A673 (cell line): ENCODE measurements at regions of chr7 and their contacts with region 1.

Region 1: DNA sequence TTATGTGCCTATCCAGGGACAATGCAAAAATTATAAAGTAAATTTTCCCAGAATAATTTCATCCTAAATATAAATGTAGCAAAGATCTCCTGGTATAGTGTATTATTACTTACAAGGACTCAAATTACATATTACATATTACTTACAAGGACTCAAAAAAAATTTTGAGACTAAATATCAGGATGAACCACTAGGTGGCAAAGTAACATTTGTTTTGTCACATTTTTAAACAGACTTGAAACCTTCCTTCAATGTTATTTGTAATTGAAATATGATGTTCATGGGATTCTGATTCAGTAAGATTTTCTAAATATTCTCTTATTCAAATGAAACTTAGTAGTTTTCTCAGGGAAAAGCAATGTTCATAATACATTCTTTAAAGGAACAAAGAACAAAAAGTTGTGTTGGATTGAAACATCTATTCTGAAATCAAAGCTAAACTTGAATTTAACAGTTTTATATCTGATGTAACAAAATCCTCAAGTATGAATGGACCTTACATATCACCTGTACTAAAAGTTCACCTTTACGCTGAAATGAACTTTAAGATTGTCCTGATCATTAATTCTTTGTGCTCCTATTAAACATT is 74.3 kb upstream of the GNAI1 start:
- DNase-seq: peak; percentile 77
- H3K4me3 ChIP-seq: no peak overlapping the region
- H3K27ac ChIP-seq: no peak overlapping the region
- H3K4me1 ChIP-seq: no peaks in the 10 kb centered on the region
- H3K27me3 ChIP-seq: no peaks in the 10 kb centered on the region
- CTCF ChIP-seq: peak; percentile 70

Region 2: DNA sequence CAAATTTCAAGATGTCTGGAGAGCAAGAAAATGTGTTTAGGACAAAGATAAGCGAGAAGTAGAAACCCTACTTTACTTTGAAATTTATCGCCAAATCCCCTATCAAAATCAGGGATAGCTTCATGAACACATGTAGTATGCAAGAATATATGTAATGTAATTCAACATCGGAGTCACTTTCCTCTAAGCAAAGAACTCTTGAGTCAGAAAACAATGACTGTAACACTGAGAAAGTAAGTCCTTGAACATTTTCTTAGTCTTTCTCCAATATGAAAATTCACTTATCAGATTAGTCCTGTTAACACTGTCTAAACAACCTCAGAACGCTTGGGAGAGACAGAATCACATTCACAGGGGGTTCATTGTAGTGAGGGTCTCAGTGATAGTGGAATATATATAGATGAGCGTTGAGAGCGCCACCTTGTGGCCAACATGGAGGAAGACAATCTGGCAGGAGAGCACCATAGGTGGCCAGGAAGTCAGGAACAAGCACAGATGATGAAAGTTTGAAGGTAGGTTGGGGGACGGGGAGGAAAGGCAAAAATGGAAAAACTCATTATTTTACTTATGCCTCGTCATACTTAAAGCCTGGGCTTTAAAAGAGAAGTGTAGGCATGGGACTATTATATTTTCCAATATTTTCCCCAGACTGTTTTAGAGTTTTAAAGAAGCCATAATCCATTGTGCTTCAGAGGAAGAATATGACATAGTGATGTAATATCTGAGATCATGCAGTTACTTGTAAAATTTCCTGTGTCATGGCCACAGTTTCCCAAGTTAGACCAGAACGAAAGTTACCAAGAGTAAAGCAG is 41.2 kb before region 1 on chr7:
- CTCF ChIA-PET with region 1: no interaction called
- POLR2A ChIA-PET with region 1: no interaction called
- intact Hi-C with region 1: no loop called
- DNase-seq: peak; percentile 71
- H3K4me3 ChIP-seq: no peak overlapping the region
- H3K27ac ChIP-seq: no peak overlapping the region
- H3K4me1 ChIP-seq: peaks cover 10% of the 10 kb centered on the region
- H3K27me3 ChIP-seq: no peaks in the 10 kb centered on the region
- CTCF ChIP-seq: peak; percentile 97

Region 3: DNA sequence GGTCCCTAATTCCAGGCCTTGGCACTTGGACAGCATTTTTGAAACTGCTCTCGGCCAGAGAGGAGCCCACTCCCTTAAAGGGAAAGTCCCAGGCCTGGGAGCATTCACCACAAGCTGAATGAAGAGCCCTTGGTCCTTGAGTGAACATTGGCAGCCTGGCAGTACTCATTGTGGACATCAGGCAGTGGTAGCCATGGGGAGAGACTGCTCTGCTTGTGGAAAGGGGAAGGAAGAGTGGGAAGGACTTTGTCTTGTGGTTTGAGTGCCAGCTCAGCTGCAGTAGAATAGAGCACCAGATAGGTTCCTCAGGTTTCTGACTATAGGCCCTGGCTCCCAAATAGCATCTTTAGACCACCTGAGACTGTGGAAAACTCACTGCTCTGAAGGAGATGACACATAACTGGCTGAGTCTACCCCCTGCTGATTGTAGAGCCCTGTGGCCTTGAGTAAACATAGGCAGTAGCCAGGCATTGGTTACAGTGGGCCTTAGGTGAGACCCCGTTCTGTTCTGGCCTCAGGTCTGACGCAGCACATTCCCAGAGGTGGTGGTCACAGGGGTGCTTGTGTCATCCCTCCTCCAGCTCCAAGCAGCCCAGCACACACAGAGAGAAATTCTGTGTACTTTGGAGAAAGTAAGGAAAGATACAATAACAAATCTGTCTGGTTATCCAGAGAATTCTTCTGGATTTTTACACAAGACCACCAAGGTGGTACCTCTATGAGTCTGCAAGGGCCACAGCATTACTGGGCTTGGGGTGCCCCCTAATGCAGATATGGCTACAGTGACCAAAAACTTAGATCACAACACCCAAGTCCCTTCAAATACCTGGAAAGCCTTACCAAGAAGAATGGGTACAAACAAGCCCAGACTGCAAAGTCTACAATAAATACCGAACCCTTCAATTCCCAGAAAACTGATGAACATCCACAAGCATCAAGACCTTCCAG is 228.1 kb after region 1 on chr7:
- CTCF ChIA-PET with region 1: no interaction called
- POLR2A ChIA-PET with region 1: no interaction called
- intact Hi-C with region 1: loop called (anchors 5 kb)
- DNase-seq: peak; percentile 41
- H3K4me3 ChIP-seq: no peak overlapping the region
- H3K27ac ChIP-seq: no peak overlapping the region
- H3K4me1 ChIP-seq: no peaks in the 10 kb centered on the region
- H3K27me3 ChIP-seq: no peaks in the 10 kb centered on the region
- CTCF ChIP-seq: peak; percentile 52

Region 4: GRCh38 chr7:80392229-80393169 is 332.2 kb after region 1 on chr7:
- CTCF ChIA-PET with region 1: interaction called, 4 read pairs
- POLR2A ChIA-PET with region 1: no interaction called
- intact Hi-C with region 1: loop called (anchors 5 kb)
- DNase-seq: peak; percentile 57
- H3K4me3 ChIP-seq: no peak overlapping the region
- H3K27ac ChIP-seq: no peak overlapping the region
- H3K4me1 ChIP-seq: no peaks in the 10 kb centered on the region
- H3K27me3 ChIP-seq: no peaks in the 10 kb centered on the region
- CTCF ChIP-seq: peak; percentile 61; the same call in 1 of the 2 replicates

Region 5: GRCh38 chr7:80453699-80454340 is 393.5 kb after region 1 on chr7:
- CTCF ChIA-PET with region 1: no interaction called
- POLR2A ChIA-PET with region 1: no interaction called
- intact Hi-C with region 1: loop called (anchors 2 kb)
- DNase-seq: peak; percentile 58
- H3K4me3 ChIP-seq: no peak overlapping the region
- H3K27ac ChIP-seq: no peak overlapping the region
- H3K4me1 ChIP-seq: no peaks in the 10 kb centered on the region
- H3K27me3 ChIP-seq: no peaks in the 10 kb centered on the region
- CTCF ChIP-seq: peak; percentile 70